Aorta (tissue), 5 donors: ENCODE measurements at regions of chr22 and their contacts with region 1.

Region 1: DNA sequence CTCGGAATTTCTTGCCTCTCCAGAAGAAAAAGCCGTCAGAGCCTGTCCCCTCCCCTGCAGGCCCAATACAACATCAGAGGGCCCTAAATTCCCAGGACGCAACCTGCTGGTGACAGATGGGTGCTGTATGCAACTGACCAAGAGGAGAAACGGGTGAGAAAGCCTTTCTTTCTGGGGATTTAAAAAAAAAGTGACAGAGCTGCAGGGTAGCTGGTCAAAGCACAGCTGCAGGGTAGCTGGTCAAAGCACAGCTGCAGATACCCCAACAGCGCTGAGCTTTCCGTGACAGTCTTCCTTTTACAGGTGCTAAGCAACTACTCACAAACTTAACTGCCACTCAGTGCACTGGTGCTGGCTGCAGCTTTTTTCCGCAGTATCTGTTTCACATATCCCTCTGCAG is 17.8 kb downstream of the AP1B1 start:
- DNase-seq: peak in 1 of 2 donors; percentile 18
- ATAC-seq: no peak
- H3K4me3 ChIP-seq: no peak overlapping the region
- H3K27ac ChIP-seq: no peak overlapping the region
- H3K4me1 ChIP-seq: no peaks in the 10 kb centered on the region
- H3K27me3 ChIP-seq: no peaks in the 10 kb centered on the region

Region 2: DNA sequence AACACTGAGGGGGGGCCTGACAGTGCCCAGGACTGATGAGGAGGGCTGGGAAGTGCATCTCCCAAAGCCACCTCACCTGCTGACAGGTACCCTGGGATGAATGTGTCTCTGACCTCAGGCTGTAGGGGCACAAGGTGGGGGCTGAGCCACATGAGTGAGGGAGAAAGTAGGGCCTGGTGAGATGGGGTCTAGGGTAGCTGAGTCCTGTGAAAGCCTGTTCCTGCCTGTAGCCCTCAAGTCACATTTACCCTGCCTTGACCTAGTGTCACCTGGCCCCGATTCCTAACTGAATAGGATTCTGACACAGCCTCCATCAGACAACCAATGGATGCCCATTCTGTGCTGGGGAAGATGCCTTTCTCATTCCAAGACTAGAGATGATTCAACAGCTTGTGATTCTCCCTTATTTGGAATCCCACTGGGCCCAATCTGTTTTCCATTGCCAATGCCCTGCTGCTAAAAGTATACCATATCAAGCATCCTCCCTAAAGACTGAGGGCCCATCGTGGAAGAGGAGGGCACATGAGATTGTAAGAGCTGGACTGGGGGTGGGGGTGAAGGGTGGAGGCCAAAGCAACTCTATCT is 56.7 kb after region 1 on chr22:
- intact Hi-C with region 1: no loop called
- DNase-seq: no peak
- ATAC-seq: no peak
- H3K4me3 ChIP-seq: no peak overlapping the region
- H3K27ac ChIP-seq: no peak overlapping the region
- H3K4me1 ChIP-seq: no peaks in the 10 kb centered on the region
- H3K27me3 ChIP-seq: no peaks in the 10 kb centered on the region

Region 3: DNA sequence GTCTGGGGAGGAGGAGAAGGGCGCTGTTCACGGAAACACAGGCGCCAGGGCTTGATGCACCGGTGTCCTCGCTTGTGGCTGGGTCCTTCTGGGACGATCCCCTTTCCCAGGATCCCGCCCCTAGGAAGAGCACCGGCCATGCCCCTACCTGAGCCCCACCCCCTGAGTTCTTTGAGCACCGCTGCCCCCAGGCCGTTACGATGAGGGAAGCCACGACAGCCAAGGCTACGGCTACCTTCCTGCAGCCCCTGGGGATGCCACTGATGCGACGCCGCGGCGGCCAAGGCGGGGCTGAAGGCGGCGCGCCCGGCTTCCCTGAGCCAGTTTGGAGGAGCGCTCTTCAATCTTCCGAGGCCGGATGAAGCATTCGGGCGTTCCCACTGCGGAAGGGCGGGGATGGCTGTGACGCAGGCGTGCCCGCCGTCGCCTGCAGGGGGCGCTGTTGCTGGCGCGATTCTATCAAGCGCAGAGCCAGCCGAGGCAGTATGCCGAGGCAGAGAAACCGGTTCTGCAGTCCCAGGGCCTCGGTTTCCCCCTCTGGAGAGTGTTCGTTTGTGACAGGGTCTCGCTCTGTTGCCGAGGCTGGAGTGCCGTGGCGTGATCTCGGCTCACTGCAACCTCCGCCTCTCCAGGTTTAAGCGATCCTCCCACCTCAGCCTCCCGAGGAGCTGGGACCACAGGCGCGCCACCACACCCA is 99.8 kb after region 1 on chr22:
- intact Hi-C with region 1: no loop called
- DNase-seq: peak; percentile 66 to 88
- ATAC-seq: no peak
- H3K4me3 ChIP-seq: no peak overlapping the region
- H3K27ac ChIP-seq: no peak overlapping the region
- H3K4me1 ChIP-seq: no peaks in the 10 kb centered on the region
- H3K27me3 ChIP-seq: no peaks in the 10 kb centered on the region

Region 4: GRCh38 chr22:29837780-29838598 is 467.5 kb after region 1 on chr22 and contains the start of gene ASCC2:
- intact Hi-C with region 1: no loop called
- DNase-seq: peak; percentile 100
- ATAC-seq: peak; percentile 99
- H3K4me3 ChIP-seq: peak within 1 kb of the TSS; percentile 58 to 92
- H3K27ac ChIP-seq: peak within 1 kb of the TSS in 1 of 2 donors; percentile 11
- H3K4me1 ChIP-seq: no peaks in the 10 kb centered on the region
- H3K27me3 ChIP-seq: no peaks in the 10 kb centered on the region
- total RNA-seq, gene ASCC2: 36.9 to 58.0 TPM

Region 5: DNA sequence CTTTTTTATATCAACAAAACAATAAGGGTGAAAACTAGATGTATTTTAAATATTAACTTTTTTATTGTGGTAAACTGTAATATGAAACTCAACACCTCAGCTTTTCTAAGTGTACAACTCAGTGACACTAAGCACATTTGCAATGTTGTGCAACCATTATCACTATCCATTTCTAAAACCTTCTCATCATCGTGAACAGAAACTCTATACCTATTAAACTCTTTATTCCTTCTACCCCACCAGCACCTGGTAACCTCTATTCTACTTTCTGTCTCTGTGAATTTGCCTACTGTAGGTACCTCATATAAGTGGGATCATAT is 719.1 kb after region 1 on chr22:
- intact Hi-C with region 1: loop called in 1 of 2 experiments (anchors 5 kb)
- DNase-seq: no peak
- ATAC-seq: no peak
- H3K4me3 ChIP-seq: no peak overlapping the region
- H3K27ac ChIP-seq: no peak overlapping the region
- H3K4me1 ChIP-seq: no peaks in the 10 kb centered on the region
- H3K27me3 ChIP-seq: no peaks in the 10 kb centered on the region